PC-3 (cell line): ENCODE measurements at regions of chr5 and their contacts with region 1.

Region 1: GRCh38 chr5:151315998-151316597 is 12.5 kb upstream of the SLC36A3 start:
- DNase-seq: peak; percentile 93
- ATAC-seq: peak; percentile 89
- H3K4me3 ChIP-seq: no peak overlapping the region
- H3K27ac ChIP-seq: no peak overlapping the region
- H3K4me1 ChIP-seq: no peaks in the 10 kb centered on the region
- H3K27me3 ChIP-seq: no peaks in the 10 kb centered on the region
- CTCF ChIP-seq: peak; percentile 96

Region 2: DNA sequence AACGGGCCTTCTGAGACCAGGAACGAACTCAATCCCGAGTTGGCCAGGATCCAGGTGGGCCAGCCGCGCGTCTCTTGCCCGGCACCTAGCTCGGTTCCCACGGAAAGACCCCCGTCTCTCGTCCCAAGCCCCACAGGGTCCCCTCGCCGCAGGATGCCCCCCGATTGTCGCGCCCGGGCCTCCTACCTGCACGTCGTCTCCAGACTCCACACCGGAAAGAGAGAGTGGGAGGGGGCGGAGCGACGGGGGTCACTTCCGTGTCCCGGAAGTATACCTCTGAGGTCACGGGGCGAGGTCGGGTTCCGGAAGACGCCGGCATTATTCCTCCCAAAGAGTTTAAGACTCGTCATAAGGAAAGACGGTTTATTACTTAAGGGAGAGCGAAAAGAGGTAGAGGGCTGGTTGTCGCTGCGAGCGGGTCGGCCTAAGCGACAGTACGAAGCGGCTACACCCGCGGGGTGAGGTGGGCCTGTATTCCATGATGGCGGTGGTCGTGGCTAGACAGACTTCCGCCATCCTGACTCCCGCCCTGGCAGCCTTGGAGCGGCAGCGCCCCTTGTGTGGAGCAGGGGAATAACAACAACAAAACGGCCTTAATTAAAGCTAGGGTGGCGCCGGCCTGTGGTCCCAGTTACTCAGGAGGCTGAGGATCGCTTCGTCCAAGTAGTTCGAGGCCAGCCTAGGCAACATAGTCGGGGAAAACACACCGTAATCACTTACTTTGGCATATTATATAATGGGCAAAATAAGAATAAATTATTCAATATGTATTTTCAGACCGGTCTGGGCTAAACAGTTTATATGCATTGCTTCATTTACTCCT is 866.4 kb before region 1 on chr5 and contains the start of gene RPS14:
- CTCF ChIA-PET with region 1: no interaction called
- POLR2A ChIA-PET with region 1: no interaction called
- intact Hi-C with region 1: no loop called
- DNase-seq: peak; percentile 90
- ATAC-seq: peak; percentile 96
- H3K4me3 ChIP-seq: peak within 1 kb of the TSS; percentile 95
- H3K27ac ChIP-seq: peak within 1 kb of the TSS; percentile 88
- H3K4me1 ChIP-seq: peaks cover 11% of the 10 kb centered on the region
- H3K27me3 ChIP-seq: no peaks in the 10 kb centered on the region
- CTCF ChIP-seq: peak; percentile 90
- total RNA-seq, gene RPS14: 2,005 and 2,031 TPM in 2 replicates

Region 3: GRCh38 chr5:151093476-151093889 is 222.6 kb before region 1 on chr5:
- CTCF ChIA-PET with region 1: no interaction called
- POLR2A ChIA-PET with region 1: no interaction called
- intact Hi-C with region 1: no loop called
- DNase-seq: peak; percentile 87
- ATAC-seq: peak; percentile 43
- H3K4me3 ChIP-seq: peak overlapping the region; percentile 18; the same call in 1 of the 2 replicates
- H3K27ac ChIP-seq: peak overlapping the region; percentile 96
- H3K4me1 ChIP-seq: peaks cover 42% of the 10 kb centered on the region
- H3K27me3 ChIP-seq: no peaks in the 10 kb centered on the region
- CTCF ChIP-seq: no peak

Region 4: DNA sequence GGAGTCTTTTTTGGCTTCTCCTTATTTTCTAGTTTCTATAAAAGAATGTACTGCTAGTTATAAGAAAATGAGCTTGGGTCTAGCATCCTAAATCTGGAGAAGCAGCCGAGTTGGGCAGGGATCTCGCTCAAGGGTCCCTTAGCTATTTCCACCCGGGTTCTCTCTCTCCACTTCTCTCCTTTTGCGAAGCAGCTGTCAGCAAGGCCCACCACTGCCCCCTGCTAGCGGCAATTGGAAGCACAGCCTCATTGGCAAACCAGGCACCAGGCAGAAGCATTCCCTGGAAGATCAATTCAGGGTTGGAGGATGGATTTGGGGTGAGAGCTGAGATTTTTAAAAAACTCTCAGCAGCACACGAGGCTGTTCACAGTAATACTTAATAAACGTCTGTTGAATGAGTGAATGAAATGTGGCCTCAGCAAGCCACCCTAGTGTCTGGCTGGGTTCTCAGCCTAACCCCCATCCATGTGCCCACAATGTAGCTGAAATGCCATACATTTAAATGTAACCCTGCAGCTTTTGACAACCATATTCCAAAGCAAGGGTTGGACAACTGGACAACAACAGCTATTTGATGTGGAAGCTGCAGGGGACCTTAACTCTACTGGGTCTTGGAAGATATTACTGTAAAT is 200.7 kb before region 1 on chr5:
- CTCF ChIA-PET with region 1: no interaction called
- POLR2A ChIA-PET with region 1: no interaction called
- intact Hi-C with region 1: no loop called
- DNase-seq: peak; percentile 77
- ATAC-seq: peak; percentile 86
- H3K4me3 ChIP-seq: no peak overlapping the region
- H3K27ac ChIP-seq: no peak overlapping the region
- H3K4me1 ChIP-seq: no peaks in the 10 kb centered on the region
- H3K27me3 ChIP-seq: no peaks in the 10 kb centered on the region
- CTCF ChIP-seq: peak; percentile 97

Region 5: GRCh38 chr5:151196556-151197290 is 119.4 kb before region 1 on chr5:
- CTCF ChIA-PET with region 1: no interaction called
- POLR2A ChIA-PET with region 1: no interaction called
- intact Hi-C with region 1: no loop called
- DNase-seq: no peak
- ATAC-seq: no peak
- H3K4me3 ChIP-seq: no peak overlapping the region
- H3K27ac ChIP-seq: no peak overlapping the region
- H3K4me1 ChIP-seq: no peaks in the 10 kb centered on the region
- H3K27me3 ChIP-seq: no peaks in the 10 kb centered on the region
- CTCF ChIP-seq: no peak

Region 6: DNA sequence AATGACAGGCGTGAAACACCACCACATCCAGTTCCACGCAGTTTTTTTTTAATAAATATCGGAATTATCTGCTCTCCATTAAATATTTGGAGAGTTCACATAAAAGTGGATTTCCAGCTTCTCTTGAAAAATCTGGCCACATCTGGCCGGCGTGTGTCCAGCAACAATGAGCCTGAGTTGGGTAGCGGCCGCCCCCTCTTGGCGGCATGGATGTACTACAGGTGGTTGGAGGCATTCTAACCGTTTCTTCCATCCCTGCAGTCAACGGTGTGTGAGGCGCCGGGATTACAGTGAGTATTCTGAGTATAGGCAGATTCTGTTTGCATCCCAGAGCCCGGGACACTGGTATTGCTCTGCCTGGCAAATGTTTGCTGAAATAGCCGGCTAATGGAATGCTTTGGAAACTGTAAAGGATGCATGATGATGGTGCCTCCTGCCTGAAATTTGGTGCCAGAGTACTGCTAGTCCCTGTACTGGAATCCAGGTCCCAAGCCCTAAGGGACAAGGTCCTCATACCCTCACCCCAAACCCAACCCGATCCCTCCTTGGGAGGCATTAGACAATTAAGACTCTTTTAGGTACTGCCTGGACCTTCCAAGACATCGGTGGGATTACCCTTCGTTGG is 76.7 kb before region 1 on chr5:
- CTCF ChIA-PET with region 1: interaction called, 7 read pairs
- POLR2A ChIA-PET with region 1: no interaction called
- intact Hi-C with region 1: loop called (anchors 2 kb)
- DNase-seq: peak; percentile 77
- ATAC-seq: peak; percentile 93
- H3K4me3 ChIP-seq: no peak overlapping the region
- H3K27ac ChIP-seq: no peak overlapping the region
- H3K4me1 ChIP-seq: peaks cover 5% of the 10 kb centered on the region
- H3K27me3 ChIP-seq: no peaks in the 10 kb centered on the region
- CTCF ChIP-seq: peak; percentile 94

Region 7: DNA sequence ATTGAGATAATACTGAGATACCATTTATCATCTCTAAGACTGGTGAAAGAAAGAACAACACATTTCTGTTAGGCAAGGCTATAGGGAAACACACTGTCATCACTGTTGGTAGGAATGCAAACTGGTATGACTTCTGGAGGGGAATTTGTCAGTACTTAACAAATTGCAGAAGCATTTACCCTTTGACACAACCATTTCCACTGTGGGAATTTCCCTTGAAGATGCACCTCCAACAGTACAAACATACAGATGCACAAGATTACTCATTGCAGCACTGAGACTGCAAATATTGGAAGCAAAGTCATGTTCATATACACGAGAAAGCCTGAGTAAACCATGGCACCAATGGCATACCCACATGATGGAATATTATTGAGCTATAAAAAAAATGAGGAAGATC is 45.5 kb before region 1 on chr5:
- CTCF ChIA-PET with region 1: no interaction called
- POLR2A ChIA-PET with region 1: no interaction called
- intact Hi-C with region 1: loop called (anchors 5 kb)
- DNase-seq: peak; percentile 73
- ATAC-seq: peak; percentile 66
- H3K4me3 ChIP-seq: no peak overlapping the region
- H3K27ac ChIP-seq: peak overlapping the region; percentile 53
- H3K4me1 ChIP-seq: peaks cover 21% of the 10 kb centered on the region
- H3K27me3 ChIP-seq: no peaks in the 10 kb centered on the region
- CTCF ChIP-seq: no peak

Region 8: DNA sequence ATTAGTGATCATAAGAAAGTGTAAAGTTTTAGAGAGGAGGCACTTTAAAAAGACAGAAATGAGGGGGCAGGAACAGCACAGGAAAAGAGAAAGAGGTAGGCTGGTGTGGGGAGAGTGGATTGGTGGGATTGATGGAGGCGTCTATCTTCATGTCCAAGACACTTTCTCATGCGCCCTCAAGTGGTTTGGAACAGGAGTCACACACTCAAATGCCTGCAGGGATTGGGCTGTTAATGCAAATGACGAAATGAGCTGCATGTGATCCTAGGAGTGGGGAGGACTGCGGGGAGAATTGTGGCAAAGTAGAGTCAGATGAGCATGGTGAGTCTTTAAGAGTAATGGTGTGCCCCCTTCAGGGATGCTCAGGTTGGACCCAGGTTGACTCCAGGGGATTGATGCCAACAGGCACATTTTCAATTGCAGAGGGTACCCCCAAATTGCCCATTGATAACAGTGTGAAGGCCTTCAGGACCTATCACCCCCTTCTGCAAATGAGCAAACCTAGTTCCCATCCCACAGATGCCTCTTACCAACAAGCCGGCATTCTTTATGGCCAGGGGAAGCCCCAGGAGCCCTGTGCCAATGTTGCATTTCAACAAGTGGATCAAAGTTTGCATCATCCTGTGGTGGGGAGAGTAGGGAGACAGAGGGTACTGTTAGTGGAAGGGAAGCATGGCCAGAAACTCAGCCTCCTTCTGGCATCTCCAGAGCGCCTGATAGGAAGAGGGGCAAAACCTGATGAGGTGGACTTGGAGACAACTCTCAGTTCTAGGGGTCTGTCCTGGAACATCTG is 17.8 kb before region 1 on chr5:
- CTCF ChIA-PET with region 1: interaction called, 10 read pairs
- POLR2A ChIA-PET with region 1: no interaction called
- intact Hi-C with region 1: loop called (anchors 2 kb)
- DNase-seq: peak; percentile 78
- ATAC-seq: peak; percentile 53
- H3K4me3 ChIP-seq: no peak overlapping the region
- H3K27ac ChIP-seq: no peak overlapping the region
- H3K4me1 ChIP-seq: peaks cover 35% of the 10 kb centered on the region
- H3K27me3 ChIP-seq: no peaks in the 10 kb centered on the region
- CTCF ChIP-seq: peak; percentile 77

Region 9: DNA sequence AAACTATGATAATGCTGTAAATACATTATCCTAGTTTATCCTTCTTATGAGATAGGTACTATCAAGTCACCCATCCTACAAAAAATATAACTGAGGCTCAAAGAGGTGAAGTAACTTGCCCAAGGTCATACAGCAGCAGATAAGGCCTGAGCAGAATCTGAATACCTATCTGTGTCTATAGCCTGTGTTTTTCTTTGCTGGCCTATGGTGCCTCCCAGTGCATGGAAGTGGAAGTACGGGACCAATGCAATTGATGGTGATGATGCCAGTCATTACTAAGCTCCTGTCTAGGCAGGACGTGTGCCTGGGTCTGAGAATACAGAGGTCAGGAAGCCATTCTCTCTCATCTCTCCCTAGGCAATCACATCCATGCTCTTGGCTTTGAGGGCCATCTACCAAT is 207.2 kb after region 1 on chr5:
- CTCF ChIA-PET with region 1: interaction called, 4 read pairs
- POLR2A ChIA-PET with region 1: no interaction called
- intact Hi-C with region 1: loop called (anchors 5 kb)
- DNase-seq: peak; percentile 76
- ATAC-seq: peak; percentile 88
- H3K4me3 ChIP-seq: no peak overlapping the region
- H3K27ac ChIP-seq: no peak overlapping the region
- H3K4me1 ChIP-seq: peaks cover 5% of the 10 kb centered on the region; the same call in 1 of the 2 replicates
- H3K27me3 ChIP-seq: no peaks in the 10 kb centered on the region
- CTCF ChIP-seq: peak; percentile 81

Region 10: GRCh38 chr5:151659001-151659754 is 343.1 kb after region 1 on chr5:
- CTCF ChIA-PET with region 1: interaction called, 12 read pairs
- POLR2A ChIA-PET with region 1: no interaction called
- intact Hi-C with region 1: no loop called
- DNase-seq: peak; percentile 79
- ATAC-seq: peak; percentile 82
- H3K4me3 ChIP-seq: no peak overlapping the region
- H3K27ac ChIP-seq: no peak overlapping the region
- H3K4me1 ChIP-seq: peaks cover 10% of the 10 kb centered on the region
- H3K27me3 ChIP-seq: no peaks in the 10 kb centered on the region
- CTCF ChIP-seq: peak; percentile 90